Naive thymus-derived CD8-positive, alpha-beta T cell (primary cell): ENCODE measurements at regions of chr2 and their contacts with region 1.

Region 1: GRCh38 chr2:25276569-25277465 is 64.9 kb downstream of the DNMT3A start:
- DNase-seq: peak; percentile 54 to 84 (median 74)
- ATAC-seq: peak; percentile 37 to 51
- H3K4me3 Mint-ChIP-seq: peak overlapping the region; percentile 66 to 86 (median 80)
- H3K27ac Mint-ChIP-seq: peak overlapping the region; percentile 95 to 100 (median 99)
- H3K4me1 Mint-ChIP-seq: peaks cover 45 to 89% (median 79%) of the 10 kb centered on the region in 4 donors
- H3K27me3 Mint-ChIP-seq: no peaks in the 10 kb centered on the region

Region 2: GRCh38 chr2:25215948-25216679 is 60.7 kb before region 1 on chr2:
- POLR2A ChIA-PET with region 1: interaction called, 21 read pairs
- DNase-seq: peak; percentile 79 to 93 (median 88)
- ATAC-seq: peak; percentile 94 to 96
- H3K4me3 Mint-ChIP-seq: peak overlapping the region; percentile 65 to 88 (median 80)
- H3K27ac Mint-ChIP-seq: peak overlapping the region; percentile 12 to 96 (median 93)
- H3K4me1 Mint-ChIP-seq: peaks cover 9 to 32% (median 25%) of the 10 kb centered on the region in 4 donors
- H3K27me3 Mint-ChIP-seq: no peaks in the 10 kb centered on the region

Region 3: DNA sequence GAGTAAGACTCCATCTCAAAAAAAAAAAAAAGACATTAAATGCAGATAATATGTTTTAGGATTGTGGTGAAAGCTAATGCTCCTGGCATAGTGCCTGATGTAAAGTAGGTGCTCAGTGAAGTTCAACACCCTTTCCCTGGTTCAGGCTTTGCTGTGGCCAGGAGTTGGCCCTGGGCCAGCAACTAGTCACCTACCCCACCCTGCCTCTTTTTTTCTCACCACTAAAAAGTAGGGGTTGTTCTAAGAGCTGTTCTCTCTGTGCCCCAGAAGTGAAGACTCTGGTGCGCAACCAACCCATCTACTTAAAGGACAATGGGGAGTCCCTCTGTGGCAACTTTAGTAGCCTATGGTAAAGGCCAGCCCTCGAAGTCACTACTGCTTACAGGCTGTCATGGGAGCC is 11.0 kb before region 1 on chr2:
- POLR2A ChIA-PET with region 1: interaction called, 31 read pairs
- DNase-seq: peak in 9 of 10 donors; percentile 23 to 74 (median 55)
- ATAC-seq: peak; percentile 87 to 89
- H3K4me3 Mint-ChIP-seq: peak overlapping the region in 8 of 10 donors; percentile 37 to 75 (median 60)
- H3K27ac Mint-ChIP-seq: peak overlapping the region; percentile 55 to 93 (median 84)
- H3K4me1 Mint-ChIP-seq: peaks cover 28 to 72% (median 63%) of the 10 kb centered on the region in 4 donors
- H3K27me3 Mint-ChIP-seq: no peaks in the 10 kb centered on the region

Region 4: GRCh38 chr2:25301453-25302352 is 24.9 kb after region 1 on chr2:
- POLR2A ChIA-PET with region 1: interaction called, 358 read pairs
- DNase-seq: peak in 1 of 10 donors; percentile 58
- ATAC-seq: peak; percentile 2 to 62
- H3K4me3 Mint-ChIP-seq: peak overlapping the region in 6 of 10 donors; percentile 18 to 56 (median 42)
- H3K27ac Mint-ChIP-seq: peak overlapping the region; percentile 42 to 96 (median 88)
- H3K4me1 Mint-ChIP-seq: peaks cover 30 to 71% (median 61%) of the 10 kb centered on the region in 4 donors
- H3K27me3 Mint-ChIP-seq: no peaks in the 10 kb centered on the region

Region 5: DNA sequence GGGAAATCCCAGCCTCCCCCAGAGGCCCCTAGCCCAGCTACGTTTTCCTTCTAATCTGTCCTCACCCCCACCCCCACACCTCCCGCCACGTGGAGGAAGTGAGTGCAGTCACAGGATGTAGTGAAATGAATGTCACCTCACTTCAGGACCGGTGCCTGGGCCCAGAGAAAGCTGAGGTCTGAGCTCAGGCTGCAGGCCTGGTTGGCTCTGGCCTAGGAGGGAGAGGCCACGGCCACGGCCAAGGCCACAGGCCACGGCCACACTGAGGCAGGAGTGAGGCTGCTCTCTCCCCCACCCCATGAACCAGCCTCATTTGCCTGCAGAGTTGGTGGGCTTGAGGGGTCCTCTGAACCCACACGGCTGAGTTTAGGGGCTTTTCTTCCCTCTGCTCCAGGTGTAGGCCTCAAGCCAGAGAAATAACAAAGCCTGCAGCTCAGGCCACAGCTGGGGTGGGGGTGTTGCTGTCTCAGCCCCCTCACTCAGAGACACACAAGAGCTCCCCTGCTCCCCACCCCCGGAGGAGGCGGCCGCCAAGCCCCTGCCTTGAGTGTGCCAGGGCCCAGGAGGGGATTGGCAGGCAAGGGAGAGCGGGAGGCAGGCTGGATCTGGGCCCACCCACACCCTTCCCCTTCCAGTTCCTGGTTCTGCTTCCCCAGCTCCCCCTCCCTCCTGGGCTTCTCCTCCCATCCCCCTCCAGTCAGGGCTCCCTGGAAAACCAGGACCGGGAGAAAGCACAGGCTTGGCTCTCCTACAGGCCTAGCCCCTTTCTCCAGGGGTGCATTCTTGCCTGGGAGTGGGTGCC is 37.9 kb after region 1 on chr2:
- POLR2A ChIA-PET with region 1: interaction called, 44 read pairs
- DNase-seq: peak in 9 of 10 donors; percentile 39 to 78 (median 63)
- ATAC-seq: peak; percentile 83 to 88
- H3K4me3 Mint-ChIP-seq: peak overlapping the region; percentile 45 to 85 (median 79)
- H3K27ac Mint-ChIP-seq: peak overlapping the region; percentile 87 to 96 (median 93)
- H3K4me1 Mint-ChIP-seq: peaks cover 32 to 83% (median 72%) of the 10 kb centered on the region in 4 donors
- H3K27me3 Mint-ChIP-seq: no peaks in the 10 kb centered on the region

Region 6: DNA sequence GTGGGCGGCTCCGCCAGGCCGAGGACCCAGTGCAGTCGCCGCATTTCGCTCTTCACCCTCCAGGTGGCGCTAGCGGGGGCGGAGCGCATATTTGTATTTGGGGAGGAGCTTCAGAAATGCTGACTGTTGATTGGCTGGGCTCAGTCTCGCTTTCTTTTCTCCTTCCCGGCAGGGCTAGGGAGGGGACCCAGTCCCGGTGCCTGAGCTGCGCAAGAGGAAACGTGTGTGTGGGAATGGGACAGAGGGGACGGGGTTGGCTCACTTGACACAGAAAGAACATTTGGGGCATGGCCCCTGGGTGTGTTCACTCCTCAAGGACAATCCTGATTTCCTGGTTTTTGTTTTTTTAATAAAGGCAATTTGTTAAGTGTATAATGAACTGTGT is 85.2 kb after region 1 on chr2:
- POLR2A ChIA-PET with region 1: interaction called, 19 read pairs
- DNase-seq: peak; percentile 85 to 99 (median 93)
- ATAC-seq: peak; percentile 89 to 97
- H3K4me3 Mint-ChIP-seq: peak overlapping the region; percentile 89 to 99 (median 94)
- H3K27ac Mint-ChIP-seq: peak overlapping the region; percentile 85 to 100 (median 94)
- H3K4me1 Mint-ChIP-seq: peaks cover 11 to 21% (median 19%) of the 10 kb centered on the region in 4 donors
- H3K27me3 Mint-ChIP-seq: no peaks in the 10 kb centered on the region